ENCODE measurements at regions of chr13 and their contacts with region 1.

Region 1: GRCh38 chr13:77429320-77430142 is 102.6 kb upstream of the MYCBP2 start:
- DNase-seq: peak; percentile 79
- ATAC-seq: peak; percentile 89
- H3K4me3 ChIP-seq: peak overlapping the region in 1 of 5 experiments; percentile 22
- H3K4me3 Mint-ChIP-seq: peak overlapping the region; percentile 74
- H3K27ac ChIP-seq: peak overlapping the region; percentile 60 to 78
- H3K27ac Mint-ChIP-seq: peak overlapping the region; percentile 95
- H3K4me1 ChIP-seq: peaks cover 15 to 21% of the 10 kb centered on the region in 2 donors
- H3K4me1 Mint-ChIP-seq: peaks cover 32% of the 10 kb centered on the region
- H3K27me3 ChIP-seq: no peaks in the 10 kb centered on the region
- H3K27me3 Mint-ChIP-seq: no peaks in the 10 kb centered on the region
- CTCF ChIP-seq: no peak

Region 2: GRCh38 chr13:76792731-76793347 is 636.7 kb before region 1 on chr13:
- CTCF ChIA-PET with region 1: no interaction called
- POLR2A ChIA-PET with region 1: no interaction called
- intact Hi-C with region 1: no loop called
- DNase-seq: no peak
- ATAC-seq: no peak
- H3K4me3 ChIP-seq: no peak overlapping the region
- H3K4me3 Mint-ChIP-seq: no peak overlapping the region
- H3K27ac ChIP-seq: no peak overlapping the region
- H3K27ac Mint-ChIP-seq: no peak overlapping the region
- H3K4me1 ChIP-seq: no peaks in the 10 kb centered on the region
- H3K4me1 Mint-ChIP-seq: no peaks in the 10 kb centered on the region
- H3K27me3 ChIP-seq: no peaks in the 10 kb centered on the region
- H3K27me3 Mint-ChIP-seq: peaks cover 12% of the 10 kb centered on the region
- CTCF ChIP-seq: no peak

Region 3: GRCh38 chr13:77298426-77298825 is 131.1 kb before region 1 on chr13:
- CTCF ChIA-PET with region 1: no interaction called
- POLR2A ChIA-PET with region 1: no interaction called
- intact Hi-C with region 1: loop called (anchors 5 kb)
- DNase-seq: peak; percentile 69
- ATAC-seq: peak; percentile 80
- H3K4me3 ChIP-seq: peak overlapping the region; percentile 35 to 61 (median 43)
- H3K4me3 Mint-ChIP-seq: peak overlapping the region; percentile 83
- H3K27ac ChIP-seq: peak overlapping the region; percentile 66 to 71
- H3K27ac Mint-ChIP-seq: peak overlapping the region; percentile 85
- H3K4me1 ChIP-seq: peaks cover 40 to 60% of the 10 kb centered on the region in 2 donors
- H3K4me1 Mint-ChIP-seq: peaks cover 64% of the 10 kb centered on the region
- H3K27me3 ChIP-seq: no peaks in the 10 kb centered on the region
- H3K27me3 Mint-ChIP-seq: no peaks in the 10 kb centered on the region
- CTCF ChIP-seq: no peak

Region 4: GRCh38 chr13:77353995-77354394 is 75.5 kb before region 1 on chr13:
- CTCF ChIA-PET with region 1: no interaction called
- POLR2A ChIA-PET with region 1: no interaction called
- intact Hi-C with region 1: loop called (anchors 1 kb)
- DNase-seq: peak; percentile 55
- ATAC-seq: peak; percentile 70
- H3K4me3 ChIP-seq: peak overlapping the region in 1 of 5 experiments; percentile 26
- H3K4me3 Mint-ChIP-seq: peak overlapping the region; percentile 11
- H3K27ac ChIP-seq: peak overlapping the region; percentile 55 to 82
- H3K27ac Mint-ChIP-seq: peak overlapping the region; percentile 81
- H3K4me1 ChIP-seq: peaks cover 19 to 22% of the 10 kb centered on the region in 2 donors
- H3K4me1 Mint-ChIP-seq: peaks cover 30% of the 10 kb centered on the region
- H3K27me3 ChIP-seq: no peaks in the 10 kb centered on the region
- H3K27me3 Mint-ChIP-seq: no peaks in the 10 kb centered on the region
- CTCF ChIP-seq: no peak

Region 5: GRCh38 chr13:77460195-77460594 is 30.7 kb after region 1 on chr13:
- CTCF ChIA-PET with region 1: no interaction called
- POLR2A ChIA-PET with region 1: no interaction called
- intact Hi-C with region 1: loop called (anchors 5 kb)
- DNase-seq: peak; percentile 35
- ATAC-seq: peak; percentile 65
- H3K4me3 ChIP-seq: no peak overlapping the region
- H3K4me3 Mint-ChIP-seq: no peak overlapping the region
- H3K27ac ChIP-seq: no peak overlapping the region
- H3K27ac Mint-ChIP-seq: no peak overlapping the region
- H3K4me1 ChIP-seq: peaks cover 13 to 14% of the 10 kb centered on the region in 2 donors
- H3K4me1 Mint-ChIP-seq: peaks cover 22% of the 10 kb centered on the region
- H3K27me3 ChIP-seq: no peaks in the 10 kb centered on the region
- H3K27me3 Mint-ChIP-seq: no peaks in the 10 kb centered on the region
- CTCF ChIP-seq: no peak

Region 6: DNA sequence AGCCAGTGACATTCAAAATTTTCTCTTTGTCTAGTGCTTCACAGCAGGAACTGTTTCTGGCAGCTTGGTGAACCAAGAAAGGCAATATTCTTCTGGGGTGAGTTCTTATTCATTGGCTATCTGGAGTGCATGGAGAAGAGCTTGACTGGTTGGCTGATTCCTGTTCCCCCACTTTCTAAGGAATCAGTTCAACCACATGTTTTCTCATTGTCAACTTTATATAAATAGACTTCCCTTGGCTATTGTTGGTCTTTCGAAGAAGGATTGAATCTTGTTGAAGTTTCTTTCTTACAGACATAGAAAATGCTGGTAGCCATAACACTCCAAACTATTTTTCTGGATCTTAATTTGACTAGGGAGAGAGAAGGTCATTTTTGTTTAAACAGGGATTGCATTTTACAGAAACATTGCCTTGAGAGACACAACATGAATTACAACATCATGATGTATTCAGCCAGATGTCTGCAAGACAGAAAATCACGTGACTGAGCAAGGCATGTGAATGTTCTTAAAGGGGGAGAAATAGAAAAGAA is 403.9 kb after region 1 on chr13:
- CTCF ChIA-PET with region 1: no interaction called
- POLR2A ChIA-PET with region 1: no interaction called
- intact Hi-C with region 1: no loop called
- DNase-seq: no peak
- ATAC-seq: no peak
- H3K4me3 ChIP-seq: no peak overlapping the region
- H3K4me3 Mint-ChIP-seq: no peak overlapping the region
- H3K27ac ChIP-seq: no peak overlapping the region
- H3K27ac Mint-ChIP-seq: no peak overlapping the region
- H3K4me1 ChIP-seq: no peaks in the 10 kb centered on the region
- H3K4me1 Mint-ChIP-seq: no peaks in the 10 kb centered on the region
- H3K27me3 ChIP-seq: no peaks in the 10 kb centered on the region
- H3K27me3 Mint-ChIP-seq: no peaks in the 10 kb centered on the region
- CTCF ChIP-seq: no peak

Measured in B cell (primary cell).